ENCODE measurements at regions of chr3 and their contacts with region 1.

Region 1: DNA sequence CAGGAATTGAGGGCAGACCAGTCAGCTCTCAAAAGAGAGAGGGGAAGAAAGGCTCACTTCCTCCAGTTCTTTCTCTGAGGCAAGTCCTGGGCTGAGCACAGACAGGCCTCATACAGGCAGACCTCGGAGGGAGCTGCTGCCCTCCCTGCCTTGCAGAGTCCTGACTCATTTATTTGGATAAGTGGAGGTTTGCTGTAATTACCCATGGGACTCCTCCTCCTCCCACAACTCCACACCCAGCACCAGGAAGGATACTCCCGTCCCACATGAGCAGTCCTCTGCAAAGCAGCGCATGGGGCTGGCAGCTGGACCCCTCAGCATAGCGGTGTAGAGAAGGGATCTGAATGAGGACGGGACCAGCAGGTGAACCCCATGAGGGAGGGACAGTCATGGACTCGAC is 13.4 kb upstream of the SCN10A start:
- DNase-seq: peak in 2 of 5 donors; percentile 53 to 61
- ATAC-seq: peak in 3 of 4 donors; percentile 82 to 93 (median 91)
- H3K4me3 ChIP-seq: no peak overlapping the region
- H3K27ac ChIP-seq: peak overlapping the region in 3 of 12 donors; percentile 37 to 60 (median 39)
- H3K4me1 ChIP-seq: peaks cover 0 to 17% (median 6%) of the 10 kb centered on the region in 12 donors
- H3K27me3 ChIP-seq: no peaks in the 10 kb centered on the region
- CTCF ChIP-seq: no peak
- POLR2A ChIP-seq: no peak

Region 2: GRCh38 chr3:38738630-38739395 is 90.6 kb before region 1 on chr3:
- intact Hi-C with region 1: loop called in 1 of 10 experiments (anchors 10 kb)
- DNase-seq: no peak
- ATAC-seq: peak in 2 of 4 donors; percentile 42
- H3K4me3 ChIP-seq: no peak overlapping the region
- H3K27ac ChIP-seq: no peak overlapping the region
- H3K4me1 ChIP-seq: no peaks in the 10 kb centered on the region
- H3K27me3 ChIP-seq: no peaks in the 10 kb centered on the region
- CTCF ChIP-seq: peak; percentile 21 to 60 (median 38)
- POLR2A ChIP-seq: no peak

Region 3: DNA sequence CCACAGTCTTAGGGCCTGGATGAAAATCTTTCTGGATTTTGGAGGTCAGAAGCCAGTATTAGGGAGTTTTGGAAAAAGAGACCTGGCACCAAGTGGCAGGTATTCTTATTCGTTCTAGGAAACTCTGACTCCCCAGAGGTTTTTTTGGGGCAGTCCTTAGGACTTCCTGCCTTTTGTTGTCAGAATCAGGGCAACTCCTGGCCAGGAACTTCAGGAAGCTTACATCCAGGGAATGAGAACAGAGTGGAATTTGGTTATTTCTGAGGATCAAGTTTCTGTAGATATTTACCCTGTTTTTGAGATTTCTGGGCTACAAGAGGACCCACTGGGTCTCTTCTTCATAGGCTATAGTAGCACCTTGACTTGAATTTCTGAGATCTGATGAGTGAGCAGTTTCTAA is 28.9 kb before region 1 on chr3:
- intact Hi-C with region 1: no loop called
- DNase-seq: no peak
- ATAC-seq: no peak
- H3K4me3 ChIP-seq: no peak overlapping the region
- H3K27ac ChIP-seq: no peak overlapping the region
- H3K4me1 ChIP-seq: no peaks in the 10 kb centered on the region
- H3K27me3 ChIP-seq: peaks cover 0 to 11% (median 0%) of the 10 kb centered on the region in 9 donors
- CTCF ChIP-seq: no peak
- POLR2A ChIP-seq: no peak

Region 4: GRCh38 chr3:38890426-38890825 is 61.0 kb after region 1 on chr3:
- intact Hi-C with region 1: no loop called
- DNase-seq: no peak
- ATAC-seq: no peak
- H3K4me3 ChIP-seq: no peak overlapping the region
- H3K27ac ChIP-seq: no peak overlapping the region
- H3K4me1 ChIP-seq: no peaks in the 10 kb centered on the region
- H3K27me3 ChIP-seq: no peaks in the 10 kb centered on the region
- CTCF ChIP-seq: no peak
- POLR2A ChIP-seq: no peak

Region 5: DNA sequence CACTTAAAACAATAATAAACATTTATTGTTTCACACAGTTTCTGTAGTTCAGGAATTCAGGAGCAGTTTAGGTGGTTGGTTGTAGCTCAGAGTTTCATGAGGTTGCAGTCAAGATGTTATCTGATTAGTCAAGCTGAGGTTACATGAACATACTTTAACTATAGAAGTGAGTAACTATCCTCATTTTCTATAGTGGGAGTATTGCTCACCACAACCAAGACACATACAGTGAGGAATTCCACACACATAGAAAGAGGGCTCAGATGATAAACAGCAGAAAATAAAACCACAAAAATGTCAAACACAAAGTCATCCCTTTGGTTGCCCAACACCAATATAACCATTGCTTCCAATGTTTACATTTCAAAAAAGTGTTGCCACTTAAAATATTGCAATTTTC is 208.8 kb after region 1 on chr3:
- intact Hi-C with region 1: no loop called
- DNase-seq: no peak
- ATAC-seq: no peak
- H3K4me3 ChIP-seq: no peak overlapping the region
- H3K27ac ChIP-seq: no peak overlapping the region
- H3K4me1 ChIP-seq: no peaks in the 10 kb centered on the region
- H3K27me3 ChIP-seq: no peaks in the 10 kb centered on the region
- CTCF ChIP-seq: no peak
- POLR2A ChIP-seq: no peak

Measured in heart left ventricle (tissue), 16 donors.